Ovary (tissue), 10 donors: ENCODE measurements at regions of chr21 and their contacts with region 1.

Region 1: GRCh38 chr21:38743761-38744529 is 61.8 kb upstream of the ETS2 start:
- DNase-seq: no peak
- H3K4me3 ChIP-seq: no peak overlapping the region
- H3K27ac ChIP-seq: no peak overlapping the region
- H3K4me1 ChIP-seq: no peaks in the 10 kb centered on the region
- H3K27me3 ChIP-seq: no peaks in the 10 kb centered on the region
- CTCF ChIP-seq: no peak
- EP300 ChIP-seq: no peak
- POLR2A ChIP-seq: no peak

Region 2: DNA sequence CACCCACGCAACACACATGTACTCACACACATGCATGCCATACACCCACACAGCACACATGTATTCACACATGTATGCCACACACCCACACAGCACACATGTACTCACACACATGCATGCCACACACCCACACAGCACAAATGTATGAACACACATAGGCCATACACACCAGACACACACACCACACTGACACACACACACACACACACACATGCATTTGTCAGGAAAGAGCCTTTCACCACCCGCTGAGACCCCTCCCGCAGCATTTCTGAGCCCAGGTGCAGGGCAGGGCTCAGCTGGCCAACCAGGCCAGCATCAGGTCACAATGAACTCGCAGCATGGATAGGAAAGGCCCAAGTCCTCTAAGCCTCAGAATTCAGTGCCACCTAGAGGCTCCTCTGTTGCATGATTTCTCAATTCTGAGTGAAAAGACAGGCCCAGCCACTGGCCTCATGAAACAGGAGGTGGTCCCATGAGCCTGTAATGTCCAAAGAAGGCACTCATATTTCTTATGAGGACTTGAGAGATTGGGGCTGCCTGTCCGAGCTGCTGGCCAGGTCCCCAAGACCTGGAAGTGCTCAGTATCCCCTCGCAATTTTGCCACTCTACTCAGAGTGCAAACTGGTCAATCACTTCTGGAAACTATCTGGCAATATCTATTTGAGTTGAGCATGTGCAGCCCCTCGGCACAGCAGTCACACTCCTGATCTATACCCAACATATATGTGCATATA is 382.0 kb after region 1 on chr21:
- intact Hi-C with region 1: loop called in 1 of 4 experiments (anchors 5 kb)
- DNase-seq: peak; percentile 47 to 64 (median 51)
- H3K4me3 ChIP-seq: no peak overlapping the region
- H3K27ac ChIP-seq: no peak overlapping the region
- H3K4me1 ChIP-seq: no peaks in the 10 kb centered on the region
- H3K27me3 ChIP-seq: no peaks in the 10 kb centered on the region
- CTCF ChIP-seq: peak in 2 of 3 donors; percentile 47 to 79
- EP300 ChIP-seq: no peak
- POLR2A ChIP-seq: no peak